Activated CD8-positive, alpha-beta T cell treated with anti-CD3 and anti-CD28 coated beads for 36 hours (primary cell): ENCODE measurements at regions of chr11 and their contacts with region 1.

Region 1: GRCh38 chr11:121464352-121464946 is 11.7 kb upstream of the SORL1-AS1 start:
- DNase-seq: peak; percentile 96
- ATAC-seq: peak; percentile 77
- H3K4me3 Mint-ChIP-seq: peak overlapping the region; percentile 62
- H3K27ac Mint-ChIP-seq: peak overlapping the region; percentile 98
- H3K4me1 Mint-ChIP-seq: peaks cover 95% of the 10 kb centered on the region
- H3K27me3 Mint-ChIP-seq: no peaks in the 10 kb centered on the region
- CTCF ChIP-seq: no peak

Region 2: DNA sequence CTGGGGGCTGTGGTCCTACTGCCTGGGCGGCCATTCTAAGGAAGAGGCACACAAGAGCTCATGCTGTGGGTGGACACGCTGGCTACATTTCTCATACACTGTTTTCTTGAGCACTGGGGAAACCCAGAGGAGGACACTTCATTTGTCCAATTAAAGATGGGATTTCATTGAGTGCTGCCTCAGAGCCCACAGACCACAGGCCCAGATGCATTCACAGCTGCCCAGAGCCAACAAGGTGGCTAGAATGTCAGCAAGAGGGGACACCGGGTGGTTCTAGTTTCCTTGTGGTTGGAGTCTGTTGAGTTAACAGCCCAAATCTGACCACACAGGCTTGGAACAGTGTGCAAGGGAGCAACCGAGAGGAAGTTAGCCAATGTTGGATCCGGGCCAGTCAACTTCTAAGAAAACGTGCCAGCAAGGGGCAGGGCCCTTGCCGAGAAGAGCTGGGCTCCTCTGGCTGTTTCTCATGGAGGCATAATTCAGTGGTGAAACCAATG is 47.3 kb before region 1 on chr11:
- CTCF ChIA-PET with region 1: no interaction called
- POLR2A ChIA-PET with region 1: interaction called, 5 read pairs
- intact Hi-C with region 1: loop called (anchors 5 kb)
- DNase-seq: peak; percentile 80
- ATAC-seq: peak; percentile 65
- H3K4me3 Mint-ChIP-seq: no peak overlapping the region
- H3K27ac Mint-ChIP-seq: peak overlapping the region; percentile 74
- H3K4me1 Mint-ChIP-seq: peaks cover 52% of the 10 kb centered on the region
- H3K27me3 Mint-ChIP-seq: no peaks in the 10 kb centered on the region
- CTCF ChIP-seq: no peak

Region 3: DNA sequence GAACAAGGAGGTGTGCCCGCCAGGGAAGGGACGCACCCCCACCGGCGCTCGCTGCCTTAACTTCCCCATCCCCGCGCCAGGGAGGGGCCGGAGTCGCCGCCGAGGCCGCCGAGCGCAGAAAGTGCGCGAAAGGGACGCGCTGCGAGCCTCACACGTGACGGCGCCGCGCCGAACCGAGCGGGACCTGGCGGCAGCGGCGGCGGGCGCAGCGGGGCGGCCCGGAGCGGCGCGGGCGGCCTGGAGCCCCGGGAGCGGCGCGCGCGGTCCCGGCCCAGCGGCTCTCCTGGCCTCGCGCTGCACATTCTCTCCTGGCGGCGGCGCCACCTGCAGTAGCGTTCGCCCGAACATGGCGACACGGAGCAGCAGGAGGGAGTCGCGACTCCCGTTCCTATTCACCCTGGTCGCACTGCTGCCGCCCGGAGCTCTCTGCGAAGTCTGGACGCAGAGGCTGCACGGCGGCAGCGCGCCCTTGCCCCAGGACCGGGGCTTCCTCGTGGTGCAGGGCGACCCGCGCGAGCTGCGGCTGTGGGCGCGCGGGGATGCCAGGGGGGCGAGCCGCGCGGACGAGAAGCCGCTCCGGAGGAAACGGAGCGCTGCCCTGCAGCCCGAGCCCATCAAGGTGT is 12.4 kb before region 1 on chr11 and contains the start of gene SORL1:
- CTCF ChIA-PET with region 1: interaction called, 78 read pairs
- POLR2A ChIA-PET with region 1: interaction called, 180 read pairs
- intact Hi-C with region 1: loop called (anchors 2 kb)
- DNase-seq: peak; percentile 84
- ATAC-seq: peak; percentile 66
- H3K4me3 Mint-ChIP-seq: peak within 1 kb of the TSS; percentile 95
- H3K27ac Mint-ChIP-seq: peak within 1 kb of the TSS; percentile 98
- H3K4me1 Mint-ChIP-seq: peaks cover 77% of the 10 kb centered on the region
- H3K27me3 Mint-ChIP-seq: no peaks in the 10 kb centered on the region
- CTCF ChIP-seq: peak; percentile 43
- total RNA-seq, gene SORL1: 61.1 to 64.6 TPM

Region 4: DNA sequence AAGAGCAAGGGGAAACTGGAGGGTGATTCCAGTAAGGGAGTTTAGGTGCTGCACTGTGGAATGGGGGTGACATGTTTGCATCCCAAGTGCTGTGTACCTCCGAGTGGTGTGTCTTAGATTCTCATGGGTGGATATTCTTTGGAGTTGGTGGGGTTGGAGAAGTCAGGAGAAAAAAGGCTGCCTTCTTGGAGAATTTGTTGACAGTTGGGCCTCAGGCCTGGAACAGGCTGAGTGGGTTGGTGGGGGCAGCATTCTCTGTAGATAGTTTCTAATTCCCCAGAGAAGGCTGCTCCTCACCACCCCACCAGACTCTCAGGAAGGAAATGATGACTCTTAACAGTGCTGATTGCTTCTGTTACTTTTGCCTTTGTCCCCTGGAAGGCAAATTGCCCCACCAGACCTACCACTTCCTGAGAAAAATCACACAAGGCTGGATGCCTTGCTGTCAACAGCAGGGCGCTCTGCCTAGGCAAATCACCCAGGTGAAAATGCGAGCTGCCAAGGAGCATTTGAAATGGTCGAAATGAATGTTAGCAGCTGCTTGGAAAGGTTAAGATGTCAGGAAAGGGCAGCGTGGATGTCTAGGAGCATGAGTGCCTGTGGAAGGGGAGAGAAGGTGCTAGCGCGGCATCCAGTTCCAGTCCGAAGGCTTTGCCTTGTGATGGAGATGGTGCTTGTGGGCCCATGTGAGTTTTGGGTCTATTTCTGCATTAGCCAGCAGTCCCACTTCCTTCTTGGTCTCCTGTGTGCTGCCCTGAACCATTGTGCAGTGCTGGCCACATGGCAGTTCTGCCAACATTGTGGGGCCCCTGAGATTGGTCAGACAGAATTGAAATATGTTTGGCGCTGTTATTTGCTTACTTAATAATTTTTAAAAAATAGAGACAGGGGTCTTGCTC is 18.0 kb after region 1 on chr11:
- CTCF ChIA-PET with region 1: interaction called, 14 read pairs
- POLR2A ChIA-PET with region 1: interaction called, 9 read pairs
- intact Hi-C with region 1: loop called (anchors 2 kb)
- DNase-seq: peak; percentile 73
- ATAC-seq: peak; percentile 83
- H3K4me3 Mint-ChIP-seq: peak overlapping the region; percentile 75
- H3K27ac Mint-ChIP-seq: peak overlapping the region; percentile 94
- H3K4me1 Mint-ChIP-seq: peaks cover 58% of the 10 kb centered on the region
- H3K27me3 Mint-ChIP-seq: no peaks in the 10 kb centered on the region
- CTCF ChIP-seq: no peak

Region 5: GRCh38 chr11:121534131-121535093 is 70.0 kb after region 1 on chr11:
- CTCF ChIA-PET with region 1: no interaction called
- POLR2A ChIA-PET with region 1: interaction called, 3 read pairs
- intact Hi-C with region 1: loop called (anchors 10 kb)
- DNase-seq: no peak
- ATAC-seq: no peak
- H3K4me3 Mint-ChIP-seq: no peak overlapping the region
- H3K27ac Mint-ChIP-seq: peak overlapping the region; percentile 17
- H3K4me1 Mint-ChIP-seq: peaks cover 58% of the 10 kb centered on the region
- H3K27me3 Mint-ChIP-seq: no peaks in the 10 kb centered on the region
- CTCF ChIP-seq: no peak

Region 6: GRCh38 chr11:121563900-121564822 is 99.7 kb after region 1 on chr11:
- CTCF ChIA-PET with region 1: no interaction called
- POLR2A ChIA-PET with region 1: no interaction called
- intact Hi-C with region 1: loop called (anchors 10 kb)
- DNase-seq: no peak
- ATAC-seq: no peak
- H3K4me3 Mint-ChIP-seq: no peak overlapping the region
- H3K27ac Mint-ChIP-seq: peak overlapping the region; percentile 57
- H3K4me1 Mint-ChIP-seq: peaks cover 50% of the 10 kb centered on the region
- H3K27me3 Mint-ChIP-seq: no peaks in the 10 kb centered on the region
- CTCF ChIP-seq: no peak

Region 7: GRCh38 chr11:121591405-121592033 is 127.1 kb after region 1 on chr11:
- CTCF ChIA-PET with region 1: interaction called, 5 read pairs
- POLR2A ChIA-PET with region 1: no interaction called
- intact Hi-C with region 1: loop called (anchors 1 kb)
- DNase-seq: peak; percentile 80
- ATAC-seq: peak; percentile 72
- H3K4me3 Mint-ChIP-seq: no peak overlapping the region
- H3K27ac Mint-ChIP-seq: peak overlapping the region; percentile 82
- H3K4me1 Mint-ChIP-seq: peaks cover 25% of the 10 kb centered on the region
- H3K27me3 Mint-ChIP-seq: no peaks in the 10 kb centered on the region
- CTCF ChIP-seq: peak; percentile 84